Naive thymus-derived CD4-positive, alpha-beta T cell (primary cell): ENCODE measurements at regions of chr1 and their contacts with region 1.

Region 1: DNA sequence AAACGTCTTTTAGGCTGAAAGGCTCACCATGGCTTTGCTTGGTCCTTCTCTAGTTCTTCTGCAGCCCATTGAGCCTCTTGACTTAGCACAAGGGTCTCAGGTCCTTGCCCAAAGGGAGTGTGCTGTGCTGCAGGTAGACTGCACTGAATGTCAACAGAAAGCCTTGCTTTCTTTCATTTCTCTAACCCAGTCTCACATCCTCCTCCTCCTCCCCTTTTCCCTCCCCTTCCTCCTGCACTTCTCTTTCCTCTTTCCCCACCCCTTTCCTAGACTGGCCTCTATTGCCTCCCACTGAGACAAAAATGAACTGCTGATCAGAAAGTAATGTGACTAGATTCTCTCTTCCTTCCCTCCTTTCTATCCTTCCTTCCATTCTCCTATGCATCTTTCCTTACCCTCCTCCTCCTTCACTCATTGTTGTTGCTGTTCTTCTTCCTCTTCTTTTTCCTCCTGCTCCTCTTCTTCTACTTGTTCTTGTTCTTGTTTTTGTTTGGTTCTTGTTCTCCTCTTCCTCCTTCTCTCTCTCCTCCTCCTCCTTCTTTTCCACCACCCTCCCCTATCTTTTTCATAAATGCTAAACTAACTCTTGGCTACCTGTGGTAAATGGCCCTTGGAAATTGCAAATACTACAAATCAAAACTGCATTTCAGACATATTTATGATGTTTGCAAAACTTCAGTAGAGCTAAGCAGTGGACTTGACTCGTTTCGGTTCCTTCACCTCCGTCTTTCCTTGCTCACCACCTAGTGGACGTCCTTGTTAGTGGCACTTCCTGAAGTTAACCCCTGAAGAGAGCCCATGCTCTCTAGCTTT is at the start of gene SELL:
- DNase-seq: peak; percentile 21 to 83 (median 76)
- ATAC-seq: peak; percentile 91
- H3K4me3 ChIP-seq: peak within 1 kb of the TSS; percentile 62
- H3K4me3 Mint-ChIP-seq: peak within 1 kb of the TSS in 9 of 10 donors; percentile 90 to 99 (median 97)
- H3K27ac ChIP-seq: peak within 1 kb of the TSS; percentile 70
- H3K27ac Mint-ChIP-seq: peak within 1 kb of the TSS in 8 of 9 donors; percentile 85 to 98 (median 94)
- H3K4me1 ChIP-seq: peaks cover 3 to 7% of the 10 kb centered on the region in 2 donors
- H3K4me1 Mint-ChIP-seq: peaks cover 6 to 32% (median 20%) of the 10 kb centered on the region in 7 donors
- H3K27me3 ChIP-seq: no peaks in the 10 kb centered on the region
- H3K27me3 Mint-ChIP-seq: peaks cover 0 to 30% (median 0%) of the 10 kb centered on the region in 5 donors
- total RNA-seq, gene SELL: 303 to 633 (median 519) TPM

Region 2: GRCh38 chr1:168225476-168226190 is 1486.0 kb before region 1 on chr1 and contains the start of gene SFT2D2:
- CTCF ChIA-PET with region 1: no interaction called
- POLR2A ChIA-PET with region 1: no interaction called
- intact Hi-C with region 1: loop called in 1 of 2 experiments (anchors 5 kb)
- DNase-seq: peak; percentile 71 to 86 (median 83)
- ATAC-seq: peak; percentile 97
- H3K4me3 ChIP-seq: peak within 1 kb of the TSS; percentile 88
- H3K4me3 Mint-ChIP-seq: peak within 1 kb of the TSS; percentile 92 to 98 (median 96)
- H3K27ac ChIP-seq: peak within 1 kb of the TSS; percentile 85
- H3K27ac Mint-ChIP-seq: peak within 1 kb of the TSS; percentile 81 to 98 (median 92)
- H3K4me1 ChIP-seq: peaks cover 14 to 15% of the 10 kb centered on the region in 2 donors
- H3K4me1 Mint-ChIP-seq: peaks cover 30 to 56% (median 45%) of the 10 kb centered on the region in 7 donors
- H3K27me3 ChIP-seq: no peaks in the 10 kb centered on the region
- H3K27me3 Mint-ChIP-seq: peaks cover 0 to 7% (median 4%) of the 10 kb centered on the region in 5 donors
- total RNA-seq, gene SFT2D2: 46.9 to 79.8 (median 51.3) TPM

Region 3: DNA sequence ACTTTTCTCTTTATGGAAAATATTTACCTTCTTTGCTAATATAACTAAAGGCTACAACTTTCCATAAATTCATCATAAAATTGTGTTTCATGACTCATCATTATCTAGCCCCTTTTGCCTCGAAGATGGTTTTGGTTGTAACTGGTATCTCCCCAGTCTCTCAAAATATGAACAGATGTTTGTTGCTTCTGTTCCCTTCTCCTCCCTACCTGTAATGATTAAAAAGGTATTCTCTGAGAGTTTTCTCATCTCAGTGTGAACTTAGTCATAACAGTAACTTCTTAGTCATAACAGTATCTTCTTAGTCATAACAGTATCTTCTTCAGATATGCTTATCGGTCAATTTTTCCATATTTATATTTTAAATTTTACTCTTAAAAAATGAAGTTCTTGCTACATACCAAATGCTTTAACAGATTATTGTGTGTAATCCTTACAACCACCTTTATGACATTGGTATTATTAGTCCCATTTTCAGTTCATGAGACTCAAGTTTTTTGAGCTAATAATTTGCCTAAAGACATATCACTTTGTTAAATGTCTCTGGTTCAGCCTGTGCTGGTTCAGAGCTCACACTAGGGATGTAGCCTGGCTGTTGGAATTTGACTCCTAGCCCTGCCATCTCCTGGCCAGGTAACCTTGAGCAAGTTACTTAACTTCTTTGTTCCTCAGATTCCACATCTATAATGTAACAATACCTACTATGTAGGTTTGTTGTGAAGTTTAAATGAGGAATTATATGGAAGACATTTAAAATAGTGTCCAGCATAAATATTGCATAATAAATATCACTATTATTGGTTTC is 572.6 kb before region 1 on chr1:
- CTCF ChIA-PET with region 1: no interaction called
- POLR2A ChIA-PET with region 1: no interaction called
- intact Hi-C with region 1: no loop called
- DNase-seq: no peak
- ATAC-seq: no peak
- H3K4me3 ChIP-seq: no peak overlapping the region
- H3K4me3 Mint-ChIP-seq: peak overlapping the region in 1 of 10 donors; percentile 65
- H3K27ac ChIP-seq: no peak overlapping the region
- H3K27ac Mint-ChIP-seq: peak overlapping the region in 1 of 9 donors; percentile 65
- H3K4me1 ChIP-seq: no peaks in the 10 kb centered on the region
- H3K4me1 Mint-ChIP-seq: peaks cover 0 to 12% (median 0%) of the 10 kb centered on the region in 7 donors
- H3K27me3 ChIP-seq: no peaks in the 10 kb centered on the region
- H3K27me3 Mint-ChIP-seq: no peaks in the 10 kb centered on the region

Region 4: DNA sequence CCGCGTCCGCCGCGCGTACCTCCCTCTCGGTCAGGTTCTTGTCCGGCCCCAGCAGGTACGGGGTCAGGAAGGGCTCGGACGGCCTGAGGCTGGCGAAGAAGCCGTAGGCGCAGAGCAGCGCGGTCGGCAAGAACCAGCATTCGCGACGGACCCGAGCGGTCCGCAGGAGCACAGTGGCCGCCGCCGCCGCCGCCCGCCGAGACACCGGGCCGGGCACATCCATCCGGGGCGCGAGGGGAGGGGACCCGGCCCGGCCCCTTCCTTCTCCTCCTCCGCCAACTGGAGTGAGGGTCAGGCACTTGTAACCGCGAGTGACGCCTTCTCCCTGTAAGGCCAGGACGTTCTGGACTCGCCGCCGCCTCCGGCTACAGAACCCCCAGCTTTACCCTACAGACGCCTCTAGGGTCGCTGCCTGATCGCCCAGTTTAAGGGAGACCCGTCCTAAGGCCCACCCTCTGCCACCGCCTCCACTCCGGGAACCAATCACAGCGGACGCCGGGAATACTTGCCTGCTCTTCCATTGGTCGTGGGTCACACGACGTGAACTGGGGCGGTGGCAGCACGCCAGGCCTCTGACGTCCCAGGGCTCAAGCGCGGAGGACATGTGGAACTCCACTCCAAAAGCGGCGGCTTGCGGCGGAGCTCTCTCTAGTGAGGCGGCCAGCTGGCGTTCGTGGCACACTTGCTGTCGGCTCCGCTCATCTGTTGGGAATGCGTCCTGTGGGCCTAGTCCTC is 226.0 kb before region 1 on chr1 and contains the start of gene SLC19A2:
- CTCF ChIA-PET with region 1: no interaction called
- POLR2A ChIA-PET with region 1: no interaction called
- intact Hi-C with region 1: loop called (anchors 1 to 5 kb)
- DNase-seq: peak; percentile 79 to 94 (median 89)
- ATAC-seq: peak; percentile 99
- H3K4me3 ChIP-seq: peak within 1 kb of the TSS; percentile 66
- H3K4me3 Mint-ChIP-seq: peak within 1 kb of the TSS; percentile 87 to 98 (median 94)
- H3K27ac ChIP-seq: peak within 1 kb of the TSS; percentile 81
- H3K27ac Mint-ChIP-seq: peak within 1 kb of the TSS; percentile 86 to 98 (median 94)
- H3K4me1 ChIP-seq: peaks cover 4 to 12% of the 10 kb centered on the region in 2 donors
- H3K4me1 Mint-ChIP-seq: peaks cover 35 to 56% (median 46%) of the 10 kb centered on the region in 7 donors
- H3K27me3 ChIP-seq: no peaks in the 10 kb centered on the region
- H3K27me3 Mint-ChIP-seq: peaks cover 0 to 8% (median 0%) of the 10 kb centered on the region in 5 donors
- total RNA-seq, gene SLC19A2: 3.7 to 5.9 (median 4.8) TPM

Region 5: DNA sequence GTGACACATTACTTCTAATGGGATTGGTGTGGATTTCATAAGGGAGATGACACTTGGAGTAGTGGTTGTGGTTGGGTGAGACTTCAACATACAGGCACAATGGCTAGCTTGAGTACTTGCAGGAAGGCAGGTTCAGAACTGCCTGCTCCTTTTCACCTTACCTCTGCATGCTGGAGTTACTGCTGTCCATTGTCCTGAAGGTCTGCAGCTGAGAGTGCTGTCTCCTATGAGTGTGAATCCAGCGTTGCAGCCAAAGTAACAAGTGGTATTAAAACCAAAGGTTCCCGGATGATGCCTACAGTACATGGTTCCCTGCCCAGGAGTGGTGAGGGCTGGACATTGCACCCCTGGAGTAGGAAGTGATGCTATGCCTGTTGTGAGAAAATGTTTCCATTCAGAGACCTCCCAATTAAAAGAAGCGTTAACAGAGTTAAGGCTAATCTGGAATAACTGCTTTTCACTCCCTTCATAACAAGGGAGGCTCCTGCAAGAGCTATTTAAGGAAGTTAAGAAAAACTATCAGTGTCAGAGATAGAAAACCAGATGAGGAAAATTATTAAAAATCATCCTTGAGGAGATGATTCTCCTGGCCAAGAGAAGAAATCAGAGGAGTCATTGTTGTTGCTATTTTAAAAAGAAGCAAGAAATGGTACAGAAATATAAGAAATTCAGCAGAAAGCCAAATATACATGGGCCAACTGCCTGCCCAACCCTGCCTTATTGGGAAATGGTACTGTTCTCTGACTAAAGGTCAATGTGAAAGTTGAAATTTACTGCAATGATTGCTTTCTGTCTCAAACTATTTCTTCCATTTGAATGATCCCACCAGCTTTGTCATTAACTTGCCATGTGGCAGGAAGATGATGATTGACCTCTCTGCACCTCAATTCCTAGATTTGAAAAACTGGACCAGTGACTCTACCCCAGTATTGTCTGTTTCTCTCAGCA is 115.6 kb before region 1 on chr1:
- CTCF ChIA-PET with region 1: interaction called, 149 read pairs
- POLR2A ChIA-PET with region 1: interaction called, 75 read pairs
- intact Hi-C with region 1: loop called (anchors 1 kb)
- DNase-seq: peak in 2 of 9 donors; percentile 20 to 26
- ATAC-seq: peak; percentile 37
- H3K4me3 ChIP-seq: no peak overlapping the region
- H3K4me3 Mint-ChIP-seq: no peak overlapping the region
- H3K27ac ChIP-seq: no peak overlapping the region
- H3K27ac Mint-ChIP-seq: peak overlapping the region in 1 of 9 donors; percentile 1
- H3K4me1 ChIP-seq: peaks cover 0 to under 1% of the 10 kb centered on the region in 2 donors
- H3K4me1 Mint-ChIP-seq: peaks cover 6 to 33% (median 11%) of the 10 kb centered on the region in 7 donors
- H3K27me3 ChIP-seq: no peaks in the 10 kb centered on the region
- H3K27me3 Mint-ChIP-seq: peaks cover 0 to 9% (median 0%) of the 10 kb centered on the region in 5 donors

Region 6: GRCh38 chr1:169670836-169671235 is 40.8 kb before region 1 on chr1:
- CTCF ChIA-PET with region 1: interaction called, 5 read pairs
- POLR2A ChIA-PET with region 1: interaction called, 3 read pairs
- intact Hi-C with region 1: loop called (anchors 1 to 5 kb)
- DNase-seq: no peak
- ATAC-seq: no peak
- H3K4me3 ChIP-seq: no peak overlapping the region
- H3K4me3 Mint-ChIP-seq: peak overlapping the region in 8 of 10 donors; percentile 8 to 67 (median 38)
- H3K27ac ChIP-seq: no peak overlapping the region
- H3K27ac Mint-ChIP-seq: peak overlapping the region; percentile 56 to 94 (median 81)
- H3K4me1 ChIP-seq: peaks cover 7 to 32% of the 10 kb centered on the region in 2 donors
- H3K4me1 Mint-ChIP-seq: peaks cover 23 to 68% (median 65%) of the 10 kb centered on the region in 7 donors
- H3K27me3 ChIP-seq: no peaks in the 10 kb centered on the region
- H3K27me3 Mint-ChIP-seq: no peaks in the 10 kb centered on the region

Region 7: DNA sequence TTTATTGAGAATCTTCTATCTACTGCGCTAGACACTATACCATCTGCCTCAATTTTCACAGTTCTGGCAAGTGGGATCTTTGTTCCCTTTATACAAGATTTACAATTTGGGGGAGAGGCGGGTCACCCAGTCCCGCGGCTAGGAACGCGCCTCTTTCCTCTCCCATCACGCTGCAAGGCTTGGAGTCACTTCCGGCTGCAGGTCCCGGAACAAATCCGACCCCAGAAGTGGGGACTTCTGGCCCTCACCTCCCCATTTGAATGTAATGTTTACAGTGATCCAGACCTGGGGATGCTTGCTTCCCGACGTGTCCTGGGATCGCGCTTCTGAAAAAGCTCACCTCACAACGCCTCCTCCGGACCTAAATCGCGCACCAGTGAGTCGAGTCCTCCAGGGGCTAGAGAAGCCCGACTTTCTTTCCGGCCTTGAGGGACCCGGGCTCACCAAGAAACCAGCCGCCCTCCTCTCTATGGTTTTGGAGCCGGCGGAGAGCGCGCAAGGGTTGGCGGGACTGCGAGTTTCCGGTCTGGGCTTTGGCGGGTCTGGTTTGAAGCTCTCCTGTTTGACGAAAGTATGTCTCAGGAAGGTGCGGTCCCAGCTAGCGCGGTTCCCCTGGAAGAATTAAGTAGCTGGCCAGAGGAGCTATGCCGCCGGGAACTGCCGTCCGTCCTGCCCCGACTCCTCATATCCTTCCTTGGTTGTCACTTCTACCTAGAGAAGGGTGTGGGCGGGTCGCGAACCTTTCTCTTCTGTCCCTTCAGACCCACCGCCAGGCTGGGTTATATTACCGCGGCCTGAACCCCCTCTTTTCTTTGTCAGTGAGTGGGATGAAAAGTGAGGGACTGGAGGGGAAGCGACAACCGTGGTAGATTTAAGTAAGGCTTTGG is 83.1 kb after region 1 on chr1 and contains the start of gene METTL18:
- CTCF ChIA-PET with region 1: no interaction called
- POLR2A ChIA-PET with region 1: no interaction called
- intact Hi-C with region 1: loop called (anchors 1 kb)
- DNase-seq: peak; percentile 72 to 96 (median 92)
- ATAC-seq: peak; percentile 100
- H3K4me3 ChIP-seq: peak within 1 kb of the TSS; percentile 98
- H3K4me3 Mint-ChIP-seq: peak within 1 kb of the TSS; percentile 90 to 100 (median 100)
- H3K27ac ChIP-seq: peak within 1 kb of the TSS; percentile 94
- H3K27ac Mint-ChIP-seq: peak within 1 kb of the TSS; percentile 97 to 100 (median 99)
- H3K4me1 ChIP-seq: peaks cover 10 to 28% of the 10 kb centered on the region in 2 donors
- H3K4me1 Mint-ChIP-seq: peaks cover 26 to 60% (median 56%) of the 10 kb centered on the region in 7 donors
- H3K27me3 ChIP-seq: no peaks in the 10 kb centered on the region
- H3K27me3 Mint-ChIP-seq: no peaks in the 10 kb centered on the region
- total RNA-seq, gene METTL18: 4.9 to 21.1 (median 13.4) TPM

Region 8: DNA sequence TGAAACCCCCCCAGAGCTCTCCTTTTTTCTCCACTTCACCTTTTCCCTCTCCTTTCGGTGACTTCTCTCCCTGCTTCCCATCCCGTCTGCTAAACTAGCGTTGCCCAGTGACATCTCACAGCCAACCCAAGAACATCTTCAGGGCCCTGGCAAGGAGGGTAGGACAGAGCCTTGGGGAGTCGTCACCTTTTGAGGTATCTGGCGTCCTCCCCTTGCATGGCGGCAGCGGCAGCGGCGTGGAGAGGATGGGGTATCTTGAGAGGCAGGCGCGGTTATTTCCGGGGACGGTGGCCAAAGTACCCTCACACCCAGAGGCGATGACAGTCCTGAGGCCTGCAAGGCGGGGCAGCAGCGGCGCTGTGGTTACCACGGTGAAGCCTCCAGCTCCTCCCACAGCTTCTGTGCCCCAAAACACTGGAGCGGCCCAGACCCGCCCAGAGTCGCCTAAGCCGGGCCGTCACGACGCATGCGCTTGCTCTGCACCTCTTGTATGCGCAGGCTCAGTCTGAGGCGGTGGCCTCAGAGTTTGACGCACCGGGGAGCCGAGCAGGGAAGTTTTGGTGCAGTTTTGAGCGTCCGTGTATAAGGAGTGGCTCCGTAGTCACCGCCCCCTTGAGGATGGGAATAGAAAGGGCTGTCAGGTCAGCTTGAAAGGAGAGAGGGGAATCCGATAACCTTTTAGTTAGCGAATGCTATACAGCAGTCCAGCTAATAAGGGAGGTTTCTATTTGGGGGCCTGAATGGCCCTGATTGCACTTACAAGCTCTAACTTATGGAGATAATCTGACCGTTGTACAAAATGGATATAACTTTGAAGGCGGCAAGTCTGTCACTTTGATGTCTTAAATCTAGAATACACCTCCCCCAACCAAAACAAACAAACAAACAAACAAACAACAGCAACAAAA is 362.8 kb after region 1 on chr1 and contains the start of gene KIFAP3:
- CTCF ChIA-PET with region 1: no interaction called
- POLR2A ChIA-PET with region 1: no interaction called
- intact Hi-C with region 1: loop called in 1 of 2 experiments (anchors 5 kb)
- DNase-seq: peak; percentile 84 to 94 (median 92)
- ATAC-seq: peak; percentile 96
- H3K4me3 ChIP-seq: peak within 1 kb of the TSS; percentile 76
- H3K4me3 Mint-ChIP-seq: peak within 1 kb of the TSS; percentile 89 to 99 (median 96)
- H3K27ac ChIP-seq: peak within 1 kb of the TSS; percentile 90
- H3K27ac Mint-ChIP-seq: peak within 1 kb of the TSS; percentile 83 to 98 (median 94)
- H3K4me1 ChIP-seq: peaks cover 15 to 37% of the 10 kb centered on the region in 2 donors
- H3K4me1 Mint-ChIP-seq: peaks cover 34 to 65% (median 57%) of the 10 kb centered on the region in 7 donors
- H3K27me3 ChIP-seq: no peaks in the 10 kb centered on the region
- H3K27me3 Mint-ChIP-seq: peaks cover 0 to 3% (median 0%) of the 10 kb centered on the region in 5 donors
- total RNA-seq, gene KIFAP3: 12.8 to 23.8 (median 20.1) TPM

Region 9: GRCh38 chr1:170114906-170115305 is 403.2 kb after region 1 on chr1:
- CTCF ChIA-PET with region 1: no interaction called
- POLR2A ChIA-PET with region 1: no interaction called
- intact Hi-C with region 1: no loop called
- DNase-seq: no peak
- ATAC-seq: no peak
- H3K4me3 ChIP-seq: no peak overlapping the region
- H3K4me3 Mint-ChIP-seq: no peak overlapping the region
- H3K27ac ChIP-seq: no peak overlapping the region
- H3K27ac Mint-ChIP-seq: no peak overlapping the region
- H3K4me1 ChIP-seq: no peaks in the 10 kb centered on the region
- H3K4me1 Mint-ChIP-seq: no peaks in the 10 kb centered on the region
- H3K27me3 ChIP-seq: peaks cover 0 to 4% of the 10 kb centered on the region in 2 donors
- H3K27me3 Mint-ChIP-seq: peaks cover 0 to 40% (median 30%) of the 10 kb centered on the region in 5 donors